Dendritic cell treated with granulocyte-macrophage colony-stimulating factor and Interleukin-4, amounts not matched to agents 40 ng/mL and 50 ng/mL, for 4 days (primary cell): ENCODE measurements at regions of chr19 and their contacts with region 1.

Region 1: DNA sequence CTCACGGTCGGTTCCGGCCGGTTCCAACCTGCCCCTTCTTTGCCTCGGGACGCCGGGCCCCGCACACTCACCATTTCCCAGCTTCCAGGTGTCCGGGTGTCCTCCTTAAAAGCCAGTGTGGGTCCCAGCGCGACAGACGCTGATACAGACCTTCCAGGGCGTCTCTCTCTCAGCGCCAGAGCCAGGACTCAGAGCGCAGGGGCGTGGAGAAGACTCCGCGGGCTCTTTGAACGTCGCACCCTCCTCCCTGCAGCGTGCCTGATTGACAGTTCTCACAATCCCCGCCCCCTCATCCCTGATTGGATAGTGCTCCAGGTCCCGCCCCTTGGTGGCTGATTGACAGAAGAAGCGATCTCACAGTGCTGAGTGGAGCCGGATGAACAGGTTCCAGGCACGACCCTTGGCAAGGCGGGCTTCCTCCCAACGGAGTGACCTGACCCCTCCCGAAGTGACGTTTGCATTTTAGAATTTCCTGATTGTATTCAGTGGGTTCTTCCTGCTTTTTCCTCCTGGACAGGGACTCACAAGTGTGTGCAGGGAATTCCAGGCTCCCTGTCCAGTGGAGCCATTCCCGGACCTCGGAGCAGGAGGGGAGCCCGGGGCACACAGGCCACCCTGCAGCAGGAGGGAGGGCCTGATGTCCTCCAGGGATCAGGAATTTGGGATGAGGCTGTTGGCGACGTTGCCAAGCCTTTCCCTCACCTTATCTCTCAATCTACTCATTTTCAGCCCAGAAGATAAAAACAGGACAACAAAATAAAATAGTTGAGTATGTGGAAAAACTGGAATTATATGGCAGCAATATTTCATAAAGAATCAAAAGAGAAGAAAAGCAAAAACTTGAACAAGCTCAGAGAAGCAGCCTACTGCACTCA is at the start of gene ZNF823:
- H3K4me3 Mint-ChIP-seq: peak within 1 kb of the TSS; percentile 98
- H3K27ac Mint-ChIP-seq: peak within 1 kb of the TSS; percentile 93
- H3K4me1 Mint-ChIP-seq: peaks cover 28% of the 10 kb centered on the region
- H3K27me3 Mint-ChIP-seq: peaks cover 7% of the 10 kb centered on the region

Region 2: DNA sequence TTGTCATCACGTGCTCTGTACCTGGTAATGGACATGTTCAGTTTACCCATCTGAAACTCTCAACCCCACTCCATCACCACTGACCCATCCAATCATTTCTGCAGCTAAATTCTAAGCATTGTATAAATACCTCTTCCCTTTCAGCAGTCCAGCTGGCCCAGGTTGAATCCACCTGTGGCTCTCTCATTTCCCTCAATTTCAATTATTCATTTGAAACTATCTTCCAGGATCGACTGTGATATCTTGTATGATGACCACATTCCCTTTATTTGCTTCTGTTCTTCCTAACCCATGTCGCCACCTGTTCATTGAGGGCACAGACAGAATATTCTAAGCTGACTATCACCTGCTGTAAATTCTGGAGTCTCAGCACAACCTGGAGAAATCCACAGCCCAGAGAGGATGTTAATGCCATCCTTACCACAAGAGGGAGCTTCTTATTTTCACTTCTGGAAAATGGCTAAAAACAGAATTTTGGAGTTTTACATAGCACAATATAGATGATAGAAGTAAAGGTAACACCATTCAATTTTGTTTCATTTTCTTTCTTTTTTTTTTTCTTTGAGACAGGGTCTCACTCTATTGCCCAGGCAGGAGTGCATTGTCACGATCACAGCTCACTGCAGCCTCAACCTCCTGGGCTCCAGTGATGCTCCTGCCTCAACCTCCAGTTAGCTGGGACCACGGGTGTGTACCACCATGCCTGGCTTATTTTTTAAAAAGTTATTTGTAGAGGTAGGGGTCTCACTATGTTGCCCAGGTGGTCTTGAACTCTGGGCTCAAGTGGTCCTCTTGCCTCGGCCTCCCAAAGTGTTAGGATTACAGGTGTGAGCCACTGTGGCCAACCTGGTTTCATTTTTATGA is 38.8 kb before region 1 on chr19:
- intact Hi-C with region 1: loop called (anchors 5 kb)
- H3K4me3 Mint-ChIP-seq: no peak overlapping the region
- H3K27ac Mint-ChIP-seq: no peak overlapping the region
- H3K4me1 Mint-ChIP-seq: peaks cover 1% of the 10 kb centered on the region
- H3K27me3 Mint-ChIP-seq: peaks cover 10% of the 10 kb centered on the region

Region 3: GRCh38 chr19:11766597-11767591 is 27.9 kb after region 1 on chr19 and contains the start of gene ZNF441:
- intact Hi-C with region 1: loop called (anchors 1 kb)
- H3K4me3 Mint-ChIP-seq: peak within 1 kb of the TSS; percentile 96
- H3K27ac Mint-ChIP-seq: peak within 1 kb of the TSS; percentile 95
- H3K4me1 Mint-ChIP-seq: peaks cover 16% of the 10 kb centered on the region
- H3K27me3 Mint-ChIP-seq: peaks cover 11% of the 10 kb centered on the region